ENCODE measurements at regions of chr22 and their contacts with region 1.

Region 1: DNA sequence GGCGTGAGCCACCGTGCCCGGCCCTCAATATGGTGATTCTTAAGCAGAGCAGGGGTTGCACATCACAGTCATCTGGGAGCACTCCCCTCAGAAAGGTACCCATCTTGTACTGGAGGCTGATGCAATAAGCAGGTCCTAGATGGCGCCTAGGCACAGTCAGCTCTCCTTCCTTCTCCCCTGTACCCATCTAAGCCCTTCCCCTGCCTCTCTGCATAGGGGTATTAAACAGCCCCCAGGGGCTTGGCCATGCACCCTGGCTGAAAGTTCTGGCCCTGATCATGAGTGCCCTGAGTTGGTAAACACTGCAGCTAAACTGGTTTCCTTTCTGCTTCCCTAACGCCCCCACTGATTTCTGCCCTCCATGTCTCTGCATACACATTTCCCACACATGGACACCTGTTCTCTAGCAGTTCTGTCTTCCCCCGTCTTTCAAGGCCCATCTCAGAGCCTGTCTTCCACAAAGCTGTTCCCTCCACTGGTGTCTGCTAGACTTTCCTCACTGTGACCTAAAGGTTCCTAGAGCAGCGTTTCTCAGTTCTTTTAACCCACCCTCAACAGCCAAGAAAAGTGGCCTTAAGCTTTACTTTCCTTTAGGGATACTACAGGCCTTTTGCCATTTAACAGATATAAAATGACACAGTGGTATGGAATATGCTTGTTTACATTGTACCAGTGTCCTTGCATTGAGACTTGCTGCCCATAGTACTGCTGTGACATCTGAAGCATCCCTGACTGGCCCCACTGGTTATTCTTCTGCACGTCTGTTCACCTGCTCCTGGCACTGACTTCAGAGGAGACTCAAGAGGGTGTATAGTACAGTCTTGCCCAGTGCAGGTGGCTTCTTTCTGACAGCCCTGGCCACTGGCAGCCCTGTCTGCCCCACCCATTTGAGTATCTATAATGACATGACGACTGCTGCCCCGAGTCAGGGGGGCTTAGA is 15.6 kb downstream of the UBE2L3 start:
- DNase-seq: no peak
- ATAC-seq: no peak
- H3K4me3 ChIP-seq: no peak overlapping the region
- H3K27ac ChIP-seq: no peak overlapping the region
- H3K4me1 ChIP-seq: peaks cover 28% of the 10 kb centered on the region
- H3K27me3 ChIP-seq: no peaks in the 10 kb centered on the region
- CTCF ChIP-seq: no peak
- POLR2A ChIP-seq: no peak
- RAD21 ChIP-seq: no peak

Region 2: DNA sequence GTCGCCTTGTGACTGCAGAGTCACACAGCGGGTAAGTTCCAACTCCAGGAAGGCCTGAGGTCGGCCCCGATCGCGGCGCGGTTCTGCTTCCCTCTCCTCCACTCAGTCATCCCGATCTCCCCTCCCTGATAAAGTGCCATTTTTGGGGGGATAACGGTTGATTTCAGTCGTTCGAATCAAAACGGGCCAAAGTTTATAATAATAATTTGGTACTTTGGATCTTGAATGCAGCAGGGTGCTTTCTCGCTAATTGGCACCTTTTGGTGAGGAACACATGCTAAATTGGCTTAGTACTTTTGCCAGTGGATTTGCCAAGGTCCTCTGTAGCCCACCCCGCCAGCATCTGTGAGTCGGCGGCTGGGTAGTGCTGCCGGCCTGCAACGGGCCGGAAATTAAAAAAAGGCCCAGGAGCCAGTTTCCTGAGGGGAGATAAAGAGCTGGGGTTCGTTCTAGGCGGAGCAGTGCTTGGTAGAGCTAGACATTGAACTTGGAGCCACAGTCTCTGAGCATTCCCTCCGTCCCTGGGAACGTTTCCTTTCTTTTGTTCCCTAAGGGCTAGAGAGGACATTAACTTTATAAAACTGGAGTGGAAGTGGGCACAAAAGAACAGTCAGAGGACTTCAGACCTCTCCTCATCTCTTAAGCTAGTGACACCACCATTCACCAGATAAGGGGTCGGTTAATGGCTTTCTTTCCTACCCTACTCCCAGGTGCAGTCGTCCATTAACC is 14.6 kb before region 1 on chr22:
- CTCF ChIA-PET with region 1: no interaction called
- POLR2A ChIA-PET with region 1: interaction called, 15 read pairs
- dilution Hi-C with region 1: no loop called
- in situ Hi-C with region 1: no loop called
- intact Hi-C with region 1: no loop called
- DNase-seq: peak; percentile 24
- ATAC-seq: peak; percentile 57
- H3K4me3 ChIP-seq: peak overlapping the region; percentile 98
- H3K27ac ChIP-seq: peak overlapping the region; percentile 98
- H3K4me1 ChIP-seq: peaks cover 9% of the 10 kb centered on the region
- H3K27me3 ChIP-seq: no peaks in the 10 kb centered on the region
- CTCF ChIP-seq: no peak
- POLR2A ChIP-seq: peak; percentile 55
- RAD21 ChIP-seq: no peak

Region 3: DNA sequence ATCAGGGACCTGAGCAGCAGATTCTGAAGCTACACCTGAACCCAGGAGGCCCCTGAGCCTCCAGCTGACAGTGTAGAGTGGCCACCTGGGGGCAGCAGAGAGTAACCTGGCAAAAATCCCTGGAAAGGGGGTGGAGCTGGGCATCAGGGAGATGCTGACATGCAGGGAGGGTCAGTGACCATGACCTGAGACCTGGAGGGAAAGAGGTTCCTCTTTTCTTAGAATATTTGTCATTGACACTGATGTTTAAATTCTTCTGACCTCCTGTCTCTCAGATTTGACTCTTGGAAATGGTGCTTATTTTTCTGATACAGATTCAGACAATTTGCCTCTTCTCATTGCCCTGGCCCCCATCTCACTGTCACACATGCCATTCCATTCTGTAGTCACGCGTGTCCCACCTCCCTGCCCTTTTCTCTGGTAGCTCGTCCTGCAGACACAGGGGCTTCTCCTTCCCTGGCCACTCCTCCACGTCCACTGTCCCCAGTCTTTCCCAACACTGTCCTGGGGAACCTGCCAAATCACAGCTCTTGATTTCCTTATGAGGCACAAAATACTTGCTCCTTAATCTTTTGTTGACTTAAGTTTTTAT is 1187.3 kb after region 1 on chr22:
- CTCF ChIA-PET with region 1: interaction called, 13 read pairs
- POLR2A ChIA-PET with region 1: no interaction called
- dilution Hi-C with region 1: no loop called
- in situ Hi-C with region 1: no loop called
- intact Hi-C with region 1: no loop called
- DNase-seq: no peak
- ATAC-seq: peak; percentile 72; the same call in 1 of the 2 replicates
- H3K4me3 ChIP-seq: no peak overlapping the region
- H3K27ac ChIP-seq: no peak overlapping the region
- H3K4me1 ChIP-seq: no peaks in the 10 kb centered on the region
- H3K27me3 ChIP-seq: peaks cover 13% of the 10 kb centered on the region
- CTCF ChIP-seq: peak; percentile 57
- POLR2A ChIP-seq: no peak
- RAD21 ChIP-seq: peak; percentile 15; the same call in 1 of the 2 replicates